Uterus (tissue), 4 donors: ENCODE measurements at regions of chr11 and their contacts with region 1.

Region 1: DNA sequence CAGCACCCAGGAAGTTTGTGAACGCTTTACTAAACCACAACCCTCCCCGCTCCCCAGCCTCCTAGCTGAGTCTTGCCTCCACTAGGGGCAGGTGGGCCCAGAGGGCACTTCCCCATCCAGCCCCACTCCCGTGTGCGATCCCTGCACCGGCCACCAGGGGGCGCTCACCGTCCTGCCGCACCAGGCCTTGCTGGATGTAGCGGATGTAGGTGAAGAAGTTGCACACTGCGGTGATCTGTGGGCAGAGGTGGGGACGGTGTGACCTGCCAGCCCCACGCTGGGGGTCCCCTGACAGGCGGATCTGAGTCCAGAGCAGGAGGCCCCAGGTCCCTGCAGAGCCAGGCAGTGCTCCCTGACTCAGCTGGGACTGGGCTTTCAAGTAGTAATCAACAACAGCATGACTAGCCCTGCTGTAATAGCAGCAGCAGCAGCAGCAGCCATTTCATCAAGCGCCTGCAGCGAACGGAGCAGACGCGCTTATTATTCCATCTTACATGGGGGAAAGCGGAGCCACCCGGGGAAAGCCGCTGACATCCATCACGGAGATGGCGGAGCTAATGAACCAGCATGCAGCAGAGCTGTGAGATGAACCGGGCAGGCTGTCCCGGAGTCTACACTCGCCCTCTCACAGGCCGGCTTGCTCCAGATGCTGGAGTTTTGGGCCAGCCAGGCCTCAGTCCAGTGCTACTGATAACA is 7.9 kb upstream of the FADS3 start:
- DNase-seq: peak; percentile 84 to 86
- H3K4me3 ChIP-seq: no peak overlapping the region
- H3K27ac ChIP-seq: peak overlapping the region; percentile 65 to 80
- H3K4me1 ChIP-seq: no peaks in the 10 kb centered on the region
- H3K27me3 ChIP-seq: no peaks in the 10 kb centered on the region
- CTCF ChIP-seq: peak; percentile 99 to 100 (median 100)
- POLR2A ChIP-seq: peak in 1 of 2 donors; percentile 33

Region 2: DNA sequence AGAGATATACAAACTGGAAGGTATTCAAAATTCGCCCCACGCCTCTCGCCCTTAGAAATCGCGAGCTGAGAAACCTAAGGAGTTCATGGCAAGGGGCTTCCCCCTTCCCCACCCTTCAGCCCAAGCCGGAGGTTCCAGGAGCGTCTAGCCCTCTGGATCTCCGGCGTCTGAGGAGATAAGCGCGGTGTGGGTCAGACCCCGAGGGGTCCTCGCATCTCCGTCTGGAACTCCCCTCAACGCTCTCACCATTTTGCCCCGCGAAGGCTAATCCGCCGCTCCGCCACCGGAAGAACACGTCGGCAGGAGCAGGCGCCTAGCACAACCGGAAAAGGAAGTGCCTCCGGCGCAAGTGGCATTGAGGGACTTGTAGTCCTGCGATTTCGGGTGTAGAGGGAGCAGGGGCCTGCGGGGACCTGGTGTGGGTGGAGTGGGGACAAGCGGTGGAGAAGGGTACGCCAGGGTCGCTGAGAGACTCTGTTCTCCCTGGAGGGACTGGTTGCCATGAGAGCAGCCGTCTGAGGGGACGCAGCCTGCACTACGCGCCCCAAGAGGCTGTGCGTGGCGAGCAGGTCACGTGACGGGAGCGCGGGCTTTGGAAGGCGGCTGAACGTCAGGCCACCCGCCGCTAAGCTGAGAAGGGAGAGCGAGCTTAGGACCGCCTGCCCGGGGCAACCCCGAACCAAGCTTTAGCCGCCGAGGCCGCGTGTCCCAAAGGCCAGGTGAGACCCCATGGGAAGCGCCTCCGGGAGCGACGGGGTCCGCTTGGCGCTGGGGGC is 106.8 kb before region 1 on chr11 and contains the starts of genes FEN1 and TMEM258:
- intact Hi-C with region 1: loop called (anchors 10 kb)
- DNase-seq: peak; percentile 84 to 86
- H3K4me3 ChIP-seq: peak within 1 kb of the TSS; percentile 66 to 84
- H3K27ac ChIP-seq: peak within 1 kb of the TSS; percentile 91 to 98
- H3K4me1 ChIP-seq: peaks cover 3 to 5% of the 10 kb centered on the region in 2 donors
- H3K27me3 ChIP-seq: no peaks in the 10 kb centered on the region
- CTCF ChIP-seq: peak in 1 of 4 experiments; percentile 47
- POLR2A ChIP-seq: peak in 1 of 2 donors; percentile 72
- total RNA-seq, gene FEN1: 0.77 to 19.4 (median 6.8) TPM
- total RNA-seq, gene TMEM258: 14.6 to 96.9 (median 38.7) TPM

Region 3: DNA sequence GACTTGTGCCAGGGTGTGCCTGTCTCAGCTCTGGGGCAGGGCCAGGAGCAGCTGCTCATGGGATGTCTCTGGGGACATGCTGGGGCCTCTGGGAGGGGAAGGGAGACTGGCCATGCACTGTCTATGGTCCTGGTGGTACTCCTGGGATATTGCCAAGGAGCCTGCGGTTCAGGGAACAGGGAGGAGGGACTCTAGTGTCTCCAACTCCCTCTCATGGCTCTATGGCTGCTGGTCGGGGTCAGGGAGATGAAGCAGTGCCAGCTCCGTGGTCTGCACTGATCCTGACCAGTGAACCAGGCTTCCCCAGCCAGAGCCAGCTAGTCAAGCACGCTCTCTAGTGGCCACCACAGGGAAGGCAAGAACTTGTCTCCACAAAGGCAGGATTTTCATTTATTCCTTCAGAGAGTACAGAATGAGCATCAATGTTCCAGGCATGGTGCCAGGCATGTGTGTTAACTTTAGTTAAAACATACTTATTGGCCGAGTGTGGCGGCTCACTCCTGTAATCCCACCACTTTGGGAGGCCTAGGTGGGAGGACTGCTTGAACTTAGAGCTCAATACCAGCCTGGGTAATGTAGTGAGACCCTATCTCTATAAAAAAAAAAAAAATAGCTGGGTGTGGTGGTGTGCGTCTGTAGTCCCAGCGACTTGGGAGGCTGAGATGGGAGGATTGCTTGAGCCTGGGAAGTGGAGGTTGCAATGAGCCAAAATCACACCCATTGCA is 48.4 kb after region 1 on chr11:
- intact Hi-C with region 1: loop called (anchors 5 kb)
- DNase-seq: peak; percentile 94 to 95
- H3K4me3 ChIP-seq: no peak overlapping the region
- H3K27ac ChIP-seq: peak overlapping the region; percentile 40 to 52
- H3K4me1 ChIP-seq: peaks cover 0 to 8% of the 10 kb centered on the region in 2 donors
- H3K27me3 ChIP-seq: no peaks in the 10 kb centered on the region
- CTCF ChIP-seq: peak; percentile 93 to 97 (median 97)
- POLR2A ChIP-seq: peak in 1 of 2 donors; percentile 5

Region 4: GRCh38 chr11:62018981-62019664 is 119.8 kb after region 1 on chr11:
- intact Hi-C with region 1: no loop called
- DNase-seq: no peak
- H3K4me3 ChIP-seq: no peak overlapping the region
- H3K27ac ChIP-seq: no peak overlapping the region
- H3K4me1 ChIP-seq: no peaks in the 10 kb centered on the region
- H3K27me3 ChIP-seq: no peaks in the 10 kb centered on the region
- CTCF ChIP-seq: no peak
- POLR2A ChIP-seq: no peak

Region 5: DNA sequence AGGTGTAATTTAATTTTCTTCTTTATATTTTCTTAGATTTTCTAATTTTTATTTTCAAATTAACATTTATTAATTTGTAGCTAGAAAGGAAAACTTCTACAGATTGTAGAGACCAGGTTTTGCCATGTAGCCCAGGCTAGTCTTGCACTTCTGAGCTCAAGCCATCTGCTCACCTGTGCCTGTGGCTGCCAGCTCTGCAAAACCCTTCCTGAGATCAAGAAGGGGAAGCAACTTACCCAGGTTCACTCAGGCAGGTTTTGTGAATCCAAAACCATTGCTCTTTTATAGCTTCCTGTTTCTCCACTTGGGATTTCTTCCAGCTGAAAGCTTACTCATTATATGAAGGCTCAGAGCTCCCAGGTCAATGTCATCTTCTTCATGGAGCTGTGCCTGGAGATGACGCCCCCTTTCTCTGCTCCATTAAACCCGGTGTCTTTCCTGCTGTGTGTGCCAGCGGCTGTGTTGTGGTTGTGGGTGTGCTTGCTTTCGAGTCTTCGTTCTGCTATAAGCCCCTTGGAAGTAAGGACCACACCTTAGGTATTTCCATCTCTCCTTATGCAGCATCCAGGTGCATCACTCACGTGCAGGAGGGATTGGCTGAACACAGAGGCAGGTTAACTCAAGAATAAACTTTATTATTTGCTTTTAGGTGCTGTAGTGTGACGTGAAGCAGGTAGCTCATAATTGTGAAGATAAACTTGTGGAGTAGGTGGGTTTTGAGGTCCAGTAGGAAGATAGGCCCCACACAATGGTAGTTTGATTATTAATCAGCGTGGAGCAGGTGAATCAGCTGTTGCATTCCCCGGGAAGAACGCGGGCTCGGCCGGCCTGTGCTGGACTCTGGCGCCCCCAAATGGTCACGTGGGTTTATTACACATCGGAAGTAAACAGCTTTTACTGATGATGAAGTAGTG is 182.3 kb after region 1 on chr11:
- intact Hi-C with region 1: loop called (anchors 5 kb)
- DNase-seq: peak; percentile 83 to 85
- H3K4me3 ChIP-seq: no peak overlapping the region
- H3K27ac ChIP-seq: no peak overlapping the region
- H3K4me1 ChIP-seq: no peaks in the 10 kb centered on the region
- H3K27me3 ChIP-seq: no peaks in the 10 kb centered on the region
- CTCF ChIP-seq: peak; percentile 90 to 96 (median 93)
- POLR2A ChIP-seq: no peak